IMR-90 (cell line): ENCODE measurements at regions of chr19 and their contacts with region 1.

Region 1: DNA sequence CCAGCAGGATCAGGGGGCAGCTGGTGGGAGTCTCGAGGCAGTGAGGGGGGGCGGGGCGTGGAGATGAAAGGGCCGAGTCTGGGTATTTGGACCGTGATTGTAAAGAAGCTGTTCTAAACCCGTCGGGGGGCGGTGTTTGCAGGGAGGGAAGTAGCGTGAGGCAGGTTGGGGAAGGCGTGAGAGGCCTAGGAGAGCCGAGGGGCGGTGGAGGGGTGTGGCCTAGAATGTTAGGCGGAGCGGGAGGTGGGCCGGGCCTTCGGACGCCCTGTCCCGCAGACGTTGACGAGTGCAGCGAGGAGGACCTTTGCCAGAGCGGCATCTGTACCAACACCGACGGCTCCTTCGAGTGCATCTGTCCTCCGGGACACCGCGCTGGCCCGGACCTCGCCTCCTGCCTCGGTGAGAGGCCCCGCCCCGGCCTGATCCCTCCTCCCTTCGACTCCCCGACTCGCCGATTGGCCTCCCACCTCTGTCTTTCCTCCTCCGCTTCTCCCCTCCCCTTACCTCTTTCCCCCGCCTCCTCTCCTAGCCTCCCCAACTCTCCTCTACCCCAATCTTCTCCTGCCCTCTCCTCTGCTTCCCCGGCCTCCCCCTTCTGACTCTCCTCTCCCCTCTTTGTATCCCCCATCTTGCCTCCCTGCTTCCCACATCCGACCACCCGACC is 12.6 kb downstream of the LTBP4 start:
- DNase-seq: peak; percentile 72
- ATAC-seq: peak; percentile 62
- H3K4me3 ChIP-seq: peak overlapping the region; percentile 64
- H3K27ac ChIP-seq: peak overlapping the region; percentile 96
- H3K4me1 ChIP-seq: peaks cover 12% of the 10 kb centered on the region; the same call in 1 of the 2 replicates
- H3K27me3 ChIP-seq: no peaks in the 10 kb centered on the region
- CTCF ChIP-seq: no peak
- POLR2A ChIP-seq: no peak
- RAD21 ChIP-seq: no peak

Region 2: GRCh38 chr19:40542202-40542859 is 71.4 kb before region 1 on chr19:
- CTCF ChIA-PET with region 1: no interaction called
- POLR2A ChIA-PET with region 1: no interaction called
- dilution Hi-C with region 1: no loop called
- in situ Hi-C with region 1: no loop called
- intact Hi-C with region 1: no loop called
- DNase-seq: peak; percentile 60
- ATAC-seq: peak; percentile 75
- H3K4me3 ChIP-seq: no peak overlapping the region
- H3K27ac ChIP-seq: peak overlapping the region; percentile 32; the same call in 1 of the 2 replicates
- H3K4me1 ChIP-seq: peaks cover 4% of the 10 kb centered on the region; the same call in 1 of the 2 replicates
- H3K27me3 ChIP-seq: peaks cover 11% of the 10 kb centered on the region; the same call in 1 of the 2 replicates
- CTCF ChIP-seq: no peak
- POLR2A ChIP-seq: no peak
- RAD21 ChIP-seq: no peak

Region 3: DNA sequence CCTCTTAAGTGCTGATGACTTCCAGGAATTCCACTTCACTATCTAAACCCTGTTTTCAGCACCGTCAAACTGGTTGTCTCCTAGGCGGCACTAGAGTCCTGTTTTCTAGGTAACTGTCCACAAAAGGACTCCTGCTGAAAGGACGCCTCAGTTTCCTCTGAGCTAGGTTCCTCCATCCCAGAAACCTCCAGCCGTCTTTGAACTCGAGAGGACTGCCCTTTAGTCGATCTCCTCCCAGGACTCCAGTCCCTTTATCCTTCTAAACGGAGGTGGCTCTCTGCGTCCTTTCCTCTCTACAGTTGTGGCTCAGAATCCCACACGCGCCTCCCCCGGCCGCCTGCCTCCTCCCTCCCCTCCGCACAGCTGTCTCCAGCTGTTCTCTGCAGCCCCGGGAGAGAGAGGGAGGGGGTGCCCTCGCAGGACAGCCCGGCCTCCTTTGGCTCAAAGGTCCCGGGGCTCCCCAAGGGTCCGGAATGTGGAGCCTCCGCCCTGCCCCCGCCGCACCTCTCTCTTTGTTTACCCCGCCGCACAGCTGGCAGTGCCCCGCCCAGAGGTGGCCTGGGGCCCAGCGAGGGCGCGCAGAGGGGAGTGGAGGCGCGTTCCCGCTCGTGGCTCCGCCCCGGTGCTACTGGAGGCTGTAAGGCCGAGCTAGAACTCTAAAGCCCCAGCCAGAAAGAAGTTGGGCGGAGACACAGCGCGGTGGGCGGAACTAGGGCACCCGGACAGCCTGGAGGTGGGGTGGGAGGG is 10.2 kb before region 1 on chr19:
- CTCF ChIA-PET with region 1: interaction called, 6 read pairs
- POLR2A ChIA-PET with region 1: interaction called, 7 read pairs
- dilution Hi-C with region 1: no loop called
- in situ Hi-C with region 1: no loop called
- intact Hi-C with region 1: loop called (anchors 1 kb)
- DNase-seq: peak; percentile 92
- ATAC-seq: peak; percentile 85
- H3K4me3 ChIP-seq: peak overlapping the region; percentile 9
- H3K27ac ChIP-seq: peak overlapping the region; percentile 96
- H3K4me1 ChIP-seq: peaks cover 20% of the 10 kb centered on the region
- H3K27me3 ChIP-seq: no peaks in the 10 kb centered on the region
- CTCF ChIP-seq: peak; percentile 21; the same call in 1 of the 2 replicates
- POLR2A ChIP-seq: no peak
- RAD21 ChIP-seq: no peak